Thyroid gland (tissue), 4 donors: ENCODE measurements at regions of chr15 and their contacts with region 1.

Region 1: GRCh38 chr15:43185157-43186017 is at the start of gene CCNDBP1:
- DNase-seq: peak; percentile 98 to 99
- H3K4me3 ChIP-seq: peak within 1 kb of the TSS; percentile 53 to 97 (median 66)
- H3K27ac ChIP-seq: peak within 1 kb of the TSS; percentile 83 to 93 (median 93)
- H3K4me1 ChIP-seq: peaks cover 0 to 8% of the 10 kb centered on the region in 2 donors
- H3K27me3 ChIP-seq: no peaks in the 10 kb centered on the region
- CTCF ChIP-seq: peak in 4 of 6 experiments; percentile 14 to 30 (median 23)
- POLR2A ChIP-seq: peak; percentile 37 to 85
- total RNA-seq, gene CCNDBP1: 88.7 to 154 (median 110) TPM

Region 2: DNA sequence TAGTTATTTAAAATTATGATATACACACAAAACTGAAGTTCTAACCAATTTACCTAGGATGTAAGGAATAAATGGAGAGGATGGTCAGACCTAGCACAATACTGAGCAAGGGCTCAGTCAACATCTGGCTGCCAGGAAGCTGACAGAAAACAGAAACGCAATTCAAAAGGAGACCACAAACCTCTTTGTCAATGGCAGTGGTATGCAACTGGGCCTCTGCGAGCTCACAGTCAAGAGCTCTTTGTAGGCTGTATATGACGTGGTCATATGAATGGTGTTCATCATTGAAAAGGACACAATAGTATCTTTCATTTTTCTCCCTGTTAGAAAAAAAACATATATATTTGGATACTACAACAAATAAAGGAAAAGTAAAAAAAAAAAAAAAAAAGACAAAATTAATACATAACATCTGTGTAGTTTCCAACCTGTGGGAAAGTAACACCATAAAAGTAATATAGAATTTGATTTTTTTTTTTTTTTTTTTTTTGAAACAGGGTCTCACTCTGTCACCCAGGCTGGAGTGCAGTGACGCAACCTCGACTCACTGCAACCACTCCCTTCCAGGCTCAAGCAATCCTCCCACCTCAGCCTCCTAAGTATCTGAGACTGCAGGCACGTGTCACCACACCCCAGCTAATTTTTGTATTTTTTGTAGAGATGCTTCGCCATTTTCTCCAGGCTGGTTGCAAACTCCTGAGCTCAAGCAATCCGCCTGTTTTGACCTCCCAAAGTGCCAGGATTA is 117.5 kb before region 1 on chr15:
- intact Hi-C with region 1: no loop called
- DNase-seq: no peak
- H3K4me3 ChIP-seq: no peak overlapping the region
- H3K27ac ChIP-seq: no peak overlapping the region
- H3K4me1 ChIP-seq: no peaks in the 10 kb centered on the region
- H3K27me3 ChIP-seq: no peaks in the 10 kb centered on the region
- CTCF ChIP-seq: no peak
- POLR2A ChIP-seq: no peak

Region 3: DNA sequence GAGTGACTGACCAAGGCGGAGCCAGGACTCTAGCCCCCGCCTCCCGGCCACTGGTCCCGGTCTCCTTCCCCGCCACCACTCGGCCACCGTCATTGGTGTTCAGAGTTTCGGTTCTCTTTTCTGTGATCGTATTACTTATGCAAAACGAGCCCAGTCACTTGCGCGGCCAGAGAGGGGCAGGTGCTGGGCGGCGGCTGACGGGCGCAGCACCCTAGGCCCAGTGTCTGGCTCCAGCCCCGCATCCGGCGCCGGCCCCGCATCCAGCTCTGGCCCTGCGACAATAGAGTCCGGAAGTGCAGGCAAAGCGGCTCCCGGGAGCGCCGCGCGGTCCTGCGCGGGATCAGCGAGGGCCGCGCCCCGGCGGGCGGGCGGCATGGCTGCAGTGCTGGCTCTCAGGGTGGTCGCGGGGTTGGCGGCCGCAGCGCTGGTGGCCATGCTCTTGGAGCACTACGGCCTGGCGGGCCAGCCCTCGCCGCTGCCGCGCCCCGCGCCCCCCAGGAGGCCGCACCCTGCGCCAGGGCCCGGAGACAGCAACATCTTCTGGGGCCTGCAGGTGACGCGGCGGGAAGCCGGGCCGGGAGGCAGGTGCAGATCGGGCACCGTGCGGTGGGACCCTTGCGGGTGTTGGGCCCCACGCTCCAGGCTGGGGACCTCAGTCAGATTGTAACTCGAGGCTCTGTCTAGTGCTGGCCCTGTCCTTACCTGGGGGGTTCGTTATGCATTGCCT is 51.8 kb before region 1 on chr15 and contains the start of gene TMEM62:
- intact Hi-C with region 1: loop called (anchors 10 kb)
- DNase-seq: peak; percentile 92 to 94
- H3K4me3 ChIP-seq: peak within 1 kb of the TSS; percentile 86 to 97 (median 96)
- H3K27ac ChIP-seq: peak within 1 kb of the TSS; percentile 72 to 92 (median 77)
- H3K4me1 ChIP-seq: peaks cover 6 to 9% of the 10 kb centered on the region in 2 donors
- H3K27me3 ChIP-seq: no peaks in the 10 kb centered on the region
- CTCF ChIP-seq: peak in 2 of 6 experiments; percentile 13 to 23
- POLR2A ChIP-seq: peak; percentile 48 to 90
- total RNA-seq, gene TMEM62: 37.1 to 50.0 (median 42.6) TPM